OCI-LY7 (cell line): ENCODE measurements at regions of chr4 and their contacts with region 1.

Region 1: GRCh38 chr4:55184600-55185523 is 59.5 kb upstream of the KDR start:
- DNase-seq: peak; percentile 54
- H3K4me3 ChIP-seq: no peak overlapping the region
- H3K27ac ChIP-seq: no peak overlapping the region
- H3K4me1 ChIP-seq: no peaks in the 10 kb centered on the region
- CTCF ChIP-seq: peak; percentile 82

Region 2: GRCh38 chr4:55321707-55322264 is 136.9 kb after region 1 on chr4:
- CTCF ChIA-PET with region 1: no interaction called
- POLR2A ChIA-PET with region 1: no interaction called
- intact Hi-C with region 1: loop called (anchors 10 kb)
- DNase-seq: peak; percentile 70
- H3K4me3 ChIP-seq: no peak overlapping the region
- H3K27ac ChIP-seq: no peak overlapping the region
- H3K4me1 ChIP-seq: no peaks in the 10 kb centered on the region
- CTCF ChIP-seq: peak; percentile 91

Region 3: DNA sequence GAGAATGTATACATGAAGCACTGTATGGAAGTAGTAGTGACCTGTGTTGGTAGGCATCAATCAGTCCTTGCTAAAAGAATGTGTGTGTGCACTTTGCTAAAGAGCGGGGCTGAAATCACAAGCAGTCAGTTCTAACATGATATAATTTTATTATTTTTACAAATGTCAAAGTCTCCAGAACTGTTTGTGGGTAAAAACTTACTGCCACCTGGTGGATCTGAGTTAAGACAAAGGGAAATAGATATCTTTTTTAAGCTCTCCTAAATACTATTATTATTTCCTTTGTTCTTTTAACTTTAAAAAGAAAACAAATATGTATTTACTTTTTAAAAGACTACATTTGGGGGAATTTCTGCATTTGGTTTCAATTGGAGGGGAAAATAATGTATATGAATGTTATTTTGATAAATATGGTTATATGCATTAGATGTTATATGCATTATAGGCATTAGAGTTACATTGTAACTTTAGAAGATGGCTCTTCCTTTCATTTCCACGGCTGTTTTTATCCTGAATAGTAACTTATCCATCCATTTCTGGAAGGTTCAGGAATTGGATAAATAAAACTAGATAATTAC is 369.7 kb after region 1 on chr4:
- CTCF ChIA-PET with region 1: no interaction called
- POLR2A ChIA-PET with region 1: no interaction called
- intact Hi-C with region 1: loop called (anchors 2 kb)
- DNase-seq: peak; percentile 40
- H3K4me3 ChIP-seq: no peak overlapping the region
- H3K27ac ChIP-seq: no peak overlapping the region
- H3K4me1 ChIP-seq: no peaks in the 10 kb centered on the region
- CTCF ChIP-seq: peak; percentile 85

Region 4: GRCh38 chr4:55736605-55737183 is 551.8 kb after region 1 on chr4:
- CTCF ChIA-PET with region 1: no interaction called
- POLR2A ChIA-PET with region 1: no interaction called
- intact Hi-C with region 1: loop called (anchors 10 kb)
- DNase-seq: peak; percentile 7
- H3K4me3 ChIP-seq: no peak overlapping the region
- H3K27ac ChIP-seq: no peak overlapping the region
- H3K4me1 ChIP-seq: no peaks in the 10 kb centered on the region
- CTCF ChIP-seq: peak; percentile 82